GM12878 (cell line): ENCODE measurements at regions of chr3 and their contacts with region 1.

Region 1: GRCh38 chr3:24264748-24265158 is 229.9 kb downstream of the THRB start:
- DNase-seq: no peak
- ATAC-seq: peak; percentile 84
- H3K4me3 ChIP-seq: no peak overlapping the region
- H3K27ac ChIP-seq: no peak overlapping the region
- H3K4me1 ChIP-seq: no peaks in the 10 kb centered on the region
- H3K27me3 ChIP-seq: no peaks in the 10 kb centered on the region
- CTCF ChIP-seq: peak; percentile 64 to 70 (median 66); a peak in 5 of 6 replicates
- EP300 ChIP-seq: no peak
- POLR2A ChIP-seq: no peak
- RAD21 ChIP-seq: peak; percentile 74

Region 2: GRCh38 chr3:24088782-24089181 is 176.0 kb before region 1 on chr3:
- CTCF ChIA-PET with region 1: no interaction called
- POLR2A ChIA-PET with region 1: no interaction called
- RAD21 ChIA-PET with region 1: no interaction called
- SMC1A ChIA-PET with region 1: no interaction called
- in situ Hi-C with region 1: no loop called
- intact Hi-C with region 1: no loop called
- DNase-seq: no peak
- ATAC-seq: peak; percentile 78
- H3K4me3 ChIP-seq: no peak overlapping the region
- H3K27ac ChIP-seq: no peak overlapping the region
- H3K4me1 ChIP-seq: no peaks in the 10 kb centered on the region
- H3K27me3 ChIP-seq: no peaks in the 10 kb centered on the region; a peak in 1 of 4 replicates
- CTCF ChIP-seq: peak; percentile 13 to 47 (median 36); a peak in 5 of 6 replicates
- EP300 ChIP-seq: no peak
- POLR2A ChIP-seq: no peak
- RAD21 ChIP-seq: peak; percentile 24; the same call in 1 of the 2 replicates

Region 3: DNA sequence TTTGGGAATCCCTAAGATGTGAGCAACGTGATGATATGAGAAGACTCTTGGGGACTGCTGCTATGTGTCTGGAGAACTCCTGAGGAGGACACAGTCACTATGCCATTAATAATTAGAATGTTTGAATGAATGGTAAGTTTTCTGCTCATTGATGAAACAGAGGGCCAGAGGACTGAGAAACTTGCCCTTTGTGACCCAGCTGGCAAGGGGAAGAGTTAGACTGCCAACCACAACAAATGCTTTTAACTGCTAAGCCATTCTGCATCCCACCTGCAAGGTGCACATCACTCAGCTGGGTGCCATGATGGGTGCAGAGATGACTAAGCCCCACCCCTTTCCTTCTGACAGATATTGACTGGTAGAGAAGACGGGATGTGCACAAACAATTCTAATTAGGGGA is 19.7 kb before region 1 on chr3:
- CTCF ChIA-PET with region 1: interaction called, 11 read pairs
- POLR2A ChIA-PET with region 1: no interaction called
- RAD21 ChIA-PET with region 1: no interaction called
- SMC1A ChIA-PET with region 1: interaction called, 3 read pairs
- in situ Hi-C with region 1: no loop called
- intact Hi-C with region 1: no loop called
- DNase-seq: no peak
- ATAC-seq: no peak
- H3K4me3 ChIP-seq: no peak overlapping the region
- H3K27ac ChIP-seq: no peak overlapping the region
- H3K4me1 ChIP-seq: no peaks in the 10 kb centered on the region
- H3K27me3 ChIP-seq: no peaks in the 10 kb centered on the region
- CTCF ChIP-seq: no peak
- EP300 ChIP-seq: no peak
- POLR2A ChIP-seq: no peak
- RAD21 ChIP-seq: no peak

Region 4: DNA sequence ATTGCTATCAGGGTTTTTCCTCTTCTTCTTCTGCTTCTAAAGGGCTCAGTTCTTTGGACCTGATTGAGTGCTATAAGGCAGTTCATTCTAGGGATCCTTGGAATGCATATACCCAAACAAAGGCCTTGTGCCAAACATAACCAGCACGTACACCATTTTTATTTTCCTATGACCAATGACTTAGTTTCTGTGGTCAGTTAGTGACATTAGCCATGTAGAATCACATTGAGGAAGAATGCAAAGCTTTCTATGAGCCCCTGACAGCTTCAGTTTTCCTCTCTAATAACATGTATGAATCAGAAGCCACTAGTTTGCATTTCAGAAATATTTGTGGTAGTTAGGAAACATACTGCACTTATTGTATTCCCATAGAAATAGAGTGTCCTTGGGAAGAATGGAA is 10.1 kb before region 1 on chr3:
- CTCF ChIA-PET with region 1: interaction called, 13 read pairs
- POLR2A ChIA-PET with region 1: no interaction called
- RAD21 ChIA-PET with region 1: no interaction called
- SMC1A ChIA-PET with region 1: no interaction called
- in situ Hi-C with region 1: no loop called
- intact Hi-C with region 1: no loop called
- DNase-seq: no peak
- ATAC-seq: no peak
- H3K4me3 ChIP-seq: no peak overlapping the region
- H3K27ac ChIP-seq: no peak overlapping the region
- H3K4me1 ChIP-seq: no peaks in the 10 kb centered on the region
- H3K27me3 ChIP-seq: no peaks in the 10 kb centered on the region
- CTCF ChIP-seq: no peak
- EP300 ChIP-seq: no peak
- POLR2A ChIP-seq: no peak
- RAD21 ChIP-seq: no peak

Region 5: DNA sequence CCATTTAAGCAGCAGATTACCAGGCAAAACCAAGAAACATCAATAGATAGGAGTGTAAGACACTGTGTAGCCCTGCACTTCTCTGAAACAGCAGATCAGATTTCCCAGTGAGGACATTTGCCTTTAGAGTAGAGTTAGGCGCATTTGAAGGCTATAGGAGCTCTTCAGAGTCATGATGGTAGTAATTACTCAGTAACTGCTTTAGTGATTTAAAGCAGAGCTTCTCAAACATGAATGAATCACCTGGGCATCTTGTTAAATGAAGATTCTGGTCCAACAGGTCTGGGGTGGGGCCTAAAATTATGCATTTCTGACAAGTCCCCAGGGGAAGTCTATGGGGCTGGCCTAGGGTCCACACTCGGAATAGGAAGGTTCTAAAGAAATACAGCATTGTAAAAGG is 193.0 kb after region 1 on chr3:
- CTCF ChIA-PET with region 1: no interaction called
- POLR2A ChIA-PET with region 1: no interaction called
- RAD21 ChIA-PET with region 1: no interaction called
- SMC1A ChIA-PET with region 1: no interaction called
- in situ Hi-C with region 1: no loop called
- intact Hi-C with region 1: no loop called
- DNase-seq: no peak
- ATAC-seq: no peak
- H3K4me3 ChIP-seq: no peak overlapping the region
- H3K27ac ChIP-seq: no peak overlapping the region
- H3K4me1 ChIP-seq: no peaks in the 10 kb centered on the region
- H3K27me3 ChIP-seq: no peaks in the 10 kb centered on the region; a peak in 1 of 4 replicates
- CTCF ChIP-seq: no peak
- EP300 ChIP-seq: no peak
- POLR2A ChIP-seq: no peak
- RAD21 ChIP-seq: no peak

Region 6: DNA sequence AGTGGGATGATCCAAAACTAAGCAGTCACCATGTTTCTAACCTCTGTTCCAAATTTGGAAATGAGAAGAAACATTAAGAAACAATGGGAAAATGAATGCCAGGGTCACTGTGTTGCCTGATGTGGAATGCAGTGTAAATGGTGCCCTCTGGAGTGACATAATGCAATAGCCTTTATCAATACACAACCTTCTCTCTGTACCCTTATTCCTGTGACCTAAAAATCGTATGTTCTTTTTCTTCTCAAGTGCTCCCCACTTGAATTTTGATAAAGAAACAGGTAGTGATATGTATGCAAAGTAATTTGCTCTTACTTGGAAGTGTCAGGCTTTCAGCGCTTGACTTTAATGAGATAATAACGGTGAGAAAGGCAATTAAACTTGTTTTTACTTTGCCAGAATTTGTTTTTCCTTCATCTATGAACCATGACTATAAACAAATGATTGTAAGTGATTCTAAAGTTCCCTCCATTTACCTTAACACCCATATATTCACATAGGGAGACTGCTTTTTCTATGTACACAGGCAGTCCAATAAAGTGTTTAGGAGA is 375.7 kb after region 1 on chr3:
- CTCF ChIA-PET with region 1: interaction called, 4 read pairs
- POLR2A ChIA-PET with region 1: no interaction called
- RAD21 ChIA-PET with region 1: no interaction called
- SMC1A ChIA-PET with region 1: no interaction called
- in situ Hi-C with region 1: no loop called
- intact Hi-C with region 1: loop called (anchors 10 kb)
- DNase-seq: no peak
- ATAC-seq: 0 out of 3 replicates have a peak, but pooled peaks have one; percentile 52
- H3K4me3 ChIP-seq: no peak overlapping the region
- H3K27ac ChIP-seq: no peak overlapping the region
- H3K4me1 ChIP-seq: no peaks in the 10 kb centered on the region
- H3K27me3 ChIP-seq: no peaks in the 10 kb centered on the region
- CTCF ChIP-seq: peak; percentile 22 to 44 (median 38); a peak in 4 of 6 replicates
- EP300 ChIP-seq: no peak
- POLR2A ChIP-seq: no peak
- RAD21 ChIP-seq: peak; percentile 43

Region 7: DNA sequence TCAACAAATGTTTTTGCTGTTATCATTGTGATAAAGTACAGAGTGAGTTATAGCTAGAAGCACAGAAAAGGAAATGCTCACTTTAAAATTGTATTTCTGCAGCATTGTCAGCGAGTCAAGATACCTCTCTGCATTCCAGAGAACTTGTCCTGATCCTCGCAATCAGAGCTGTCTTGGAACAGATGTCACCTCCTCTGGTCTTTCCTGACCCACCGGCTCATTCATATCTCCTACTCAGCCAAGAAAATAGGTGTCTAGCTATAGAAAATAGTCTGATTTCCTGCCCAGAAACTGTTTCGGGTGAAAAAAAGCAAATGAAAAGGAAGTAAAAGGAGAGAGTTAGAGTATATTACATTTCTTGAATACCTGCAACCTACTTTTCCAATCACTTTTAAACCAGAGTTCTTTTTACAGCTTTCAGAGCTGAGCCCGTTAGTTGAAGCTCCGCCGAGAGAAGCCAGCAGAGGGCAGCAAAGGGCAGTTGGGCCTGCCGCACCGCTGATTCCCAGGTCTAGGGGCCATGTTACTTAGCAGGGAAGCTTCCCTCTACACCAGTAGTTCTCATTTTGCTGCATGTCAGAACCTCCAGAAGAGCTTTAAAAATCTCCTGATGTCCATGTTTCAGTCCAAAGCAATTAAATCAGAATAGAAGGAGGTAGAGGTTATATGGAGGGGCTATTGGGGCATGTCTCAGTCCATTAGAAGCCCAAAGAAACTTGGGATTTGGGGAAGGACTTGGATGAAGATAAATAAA is 415.6 kb after region 1 on chr3:
- CTCF ChIA-PET with region 1: interaction called, 7 read pairs
- POLR2A ChIA-PET with region 1: no interaction called
- RAD21 ChIA-PET with region 1: no interaction called
- SMC1A ChIA-PET with region 1: no interaction called
- in situ Hi-C with region 1: no loop called
- intact Hi-C with region 1: loop called (anchors 5 kb)
- DNase-seq: no peak
- ATAC-seq: peak; percentile 95
- H3K4me3 ChIP-seq: no peak overlapping the region
- H3K27ac ChIP-seq: no peak overlapping the region
- H3K4me1 ChIP-seq: no peaks in the 10 kb centered on the region
- H3K27me3 ChIP-seq: no peaks in the 10 kb centered on the region; a peak in 1 of 4 replicates
- CTCF ChIP-seq: peak; percentile 74 to 84 (median 81)
- EP300 ChIP-seq: no peak
- POLR2A ChIP-seq: no peak
- RAD21 ChIP-seq: peak; percentile 53